CD8-positive, alpha-beta T cell (primary cell): ENCODE measurements at regions of chr7 and their contacts with region 1.

Region 1: DNA sequence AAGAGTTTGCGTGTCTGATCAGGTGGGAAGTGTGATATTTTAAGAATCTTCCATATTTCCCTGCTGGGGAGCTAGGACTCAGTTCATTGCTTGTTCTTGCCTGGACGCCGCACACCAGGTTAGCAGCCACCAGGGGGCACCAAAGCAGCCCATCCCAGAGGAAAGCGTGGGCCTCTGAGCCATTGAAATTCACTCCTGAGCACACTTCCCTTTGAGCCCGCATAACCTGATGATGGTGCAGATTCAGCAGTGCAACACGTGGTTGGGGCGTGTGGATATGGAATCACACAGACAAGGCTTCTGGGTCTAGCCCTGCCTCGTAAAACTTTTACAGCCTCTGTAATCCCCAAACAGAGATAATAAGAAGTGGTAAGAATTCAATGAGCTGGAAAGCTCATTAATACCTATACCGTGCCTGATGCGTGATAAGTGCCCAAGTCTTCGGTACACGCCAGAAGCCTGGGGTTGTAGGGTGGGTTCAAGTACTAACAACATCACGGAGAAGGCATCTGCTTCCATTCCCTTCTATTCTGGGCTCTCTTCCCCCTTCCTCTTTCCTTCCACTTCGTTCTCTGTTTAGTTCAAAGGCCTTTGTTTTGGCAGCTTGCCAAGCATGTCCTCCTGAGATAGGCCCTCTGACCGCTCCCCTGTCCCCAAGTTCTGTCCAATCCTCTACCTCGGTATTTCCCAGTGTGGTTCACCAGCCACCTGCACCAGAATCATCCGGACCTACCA is 130.1 kb upstream of the KMT2E start:
- DNase-seq: peak; percentile 46 to 84 (median 77)
- ATAC-seq: peak; percentile 84
- H3K4me3 ChIP-seq: no peak overlapping the region
- H3K4me3 Mint-ChIP-seq: no peak overlapping the region
- H3K27ac ChIP-seq: no peak overlapping the region
- H3K27ac Mint-ChIP-seq: no peak overlapping the region
- H3K4me1 ChIP-seq: no peaks in the 10 kb centered on the region
- H3K4me1 Mint-ChIP-seq: peaks cover 5% of the 10 kb centered on the region
- H3K27me3 ChIP-seq: no peaks in the 10 kb centered on the region
- H3K27me3 Mint-ChIP-seq: no peaks in the 10 kb centered on the region
- CTCF ChIP-seq: peak; percentile 88

Region 2: DNA sequence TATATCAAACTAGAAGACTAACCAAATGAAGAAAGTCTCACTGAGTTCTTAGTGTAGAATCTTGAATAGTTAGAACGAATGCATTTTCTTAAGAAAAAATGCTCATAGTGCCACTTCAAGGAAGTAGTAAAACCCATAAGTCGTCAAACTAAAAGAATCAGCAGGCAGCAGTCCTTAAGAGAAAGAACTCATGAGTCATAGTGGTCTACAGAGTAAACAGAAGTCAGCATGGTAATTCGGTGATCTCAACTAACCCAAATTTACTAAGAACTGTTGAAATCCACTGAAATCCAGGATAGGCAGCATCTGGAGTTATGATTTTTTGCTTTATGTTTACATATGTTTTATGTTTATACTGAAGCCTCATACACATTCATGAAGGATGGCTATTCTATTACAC is 299.3 kb before region 1 on chr7:
- CTCF ChIA-PET with region 1: no interaction called
- POLR2A ChIA-PET with region 1: no interaction called
- intact Hi-C with region 1: no loop called
- DNase-seq: no peak
- ATAC-seq: no peak
- H3K4me3 ChIP-seq: no peak overlapping the region
- H3K4me3 Mint-ChIP-seq: no peak overlapping the region
- H3K27ac ChIP-seq: no peak overlapping the region
- H3K27ac Mint-ChIP-seq: no peak overlapping the region
- H3K4me1 ChIP-seq: no peaks in the 10 kb centered on the region
- H3K4me1 Mint-ChIP-seq: no peaks in the 10 kb centered on the region
- H3K27me3 ChIP-seq: no peaks in the 10 kb centered on the region
- H3K27me3 Mint-ChIP-seq: no peaks in the 10 kb centered on the region
- CTCF ChIP-seq: no peak

Region 3: GRCh38 chr7:104700336-104700735 is 183.5 kb before region 1 on chr7:
- CTCF ChIA-PET with region 1: no interaction called
- POLR2A ChIA-PET with region 1: no interaction called
- intact Hi-C with region 1: no loop called
- DNase-seq: no peak
- ATAC-seq: no peak
- H3K4me3 ChIP-seq: no peak overlapping the region
- H3K4me3 Mint-ChIP-seq: no peak overlapping the region
- H3K27ac ChIP-seq: no peak overlapping the region
- H3K27ac Mint-ChIP-seq: no peak overlapping the region
- H3K4me1 ChIP-seq: no peaks in the 10 kb centered on the region
- H3K4me1 Mint-ChIP-seq: no peaks in the 10 kb centered on the region
- H3K27me3 ChIP-seq: no peaks in the 10 kb centered on the region
- H3K27me3 Mint-ChIP-seq: peaks cover 5% of the 10 kb centered on the region
- CTCF ChIP-seq: no peak

Region 4: DNA sequence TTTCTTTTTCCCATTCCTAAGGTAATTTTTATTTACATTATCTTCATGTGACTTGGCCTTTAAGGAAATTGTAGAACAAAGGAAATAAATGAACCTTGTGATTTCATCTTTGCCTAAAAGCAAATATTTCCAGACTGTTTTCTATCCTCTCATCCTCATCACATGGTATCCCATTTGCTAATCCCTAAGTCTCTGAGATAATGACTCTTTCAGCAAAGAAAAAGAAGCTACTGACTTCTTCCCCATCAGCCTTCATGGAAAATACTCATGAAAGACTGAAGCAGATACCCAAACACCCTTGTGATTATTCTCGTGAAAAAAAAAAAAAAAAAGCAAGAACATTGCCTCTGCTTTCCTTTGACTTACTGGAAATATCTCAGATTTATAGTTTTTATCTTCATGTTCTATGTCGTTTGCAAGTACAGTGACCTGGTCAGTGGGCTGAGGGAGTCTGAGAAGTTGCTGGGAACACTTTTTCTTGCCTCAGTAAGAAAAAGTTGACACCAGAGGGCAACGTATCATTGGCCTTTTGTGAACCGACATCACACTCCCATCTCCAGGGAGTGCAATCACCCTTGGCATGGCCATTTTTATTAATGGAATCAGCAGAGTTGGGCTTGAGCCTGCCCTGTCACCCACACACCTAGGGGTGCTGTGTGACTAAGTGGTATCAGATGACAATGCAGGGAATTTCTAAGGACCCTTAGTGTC is 115.9 kb before region 1 on chr7:
- CTCF ChIA-PET with region 1: no interaction called
- POLR2A ChIA-PET with region 1: no interaction called
- intact Hi-C with region 1: no loop called
- DNase-seq: no peak
- ATAC-seq: no peak
- H3K4me3 ChIP-seq: no peak overlapping the region
- H3K4me3 Mint-ChIP-seq: no peak overlapping the region
- H3K27ac ChIP-seq: no peak overlapping the region
- H3K27ac Mint-ChIP-seq: no peak overlapping the region
- H3K4me1 ChIP-seq: no peaks in the 10 kb centered on the region
- H3K4me1 Mint-ChIP-seq: no peaks in the 10 kb centered on the region
- H3K27me3 ChIP-seq: no peaks in the 10 kb centered on the region
- H3K27me3 Mint-ChIP-seq: peaks cover 13% of the 10 kb centered on the region
- CTCF ChIP-seq: no peak

Region 5: GRCh38 chr7:104779888-104780287 is 104.0 kb before region 1 on chr7:
- CTCF ChIA-PET with region 1: no interaction called
- POLR2A ChIA-PET with region 1: no interaction called
- intact Hi-C with region 1: no loop called
- DNase-seq: no peak
- ATAC-seq: no peak
- H3K4me3 ChIP-seq: no peak overlapping the region
- H3K4me3 Mint-ChIP-seq: no peak overlapping the region
- H3K27ac ChIP-seq: no peak overlapping the region
- H3K27ac Mint-ChIP-seq: no peak overlapping the region
- H3K4me1 ChIP-seq: no peaks in the 10 kb centered on the region
- H3K4me1 Mint-ChIP-seq: no peaks in the 10 kb centered on the region
- H3K27me3 ChIP-seq: no peaks in the 10 kb centered on the region
- H3K27me3 Mint-ChIP-seq: no peaks in the 10 kb centered on the region
- CTCF ChIP-seq: no peak

Region 6: GRCh38 chr7:104862719-104863118 is 21.2 kb before region 1 on chr7:
- CTCF ChIA-PET with region 1: interaction called, 25 read pairs
- POLR2A ChIA-PET with region 1: no interaction called
- intact Hi-C with region 1: no loop called
- DNase-seq: no peak
- ATAC-seq: no peak
- H3K4me3 ChIP-seq: no peak overlapping the region
- H3K4me3 Mint-ChIP-seq: no peak overlapping the region
- H3K27ac ChIP-seq: no peak overlapping the region
- H3K27ac Mint-ChIP-seq: no peak overlapping the region
- H3K4me1 ChIP-seq: peaks cover 9% of the 10 kb centered on the region
- H3K4me1 Mint-ChIP-seq: peaks cover 10% of the 10 kb centered on the region
- H3K27me3 ChIP-seq: no peaks in the 10 kb centered on the region
- H3K27me3 Mint-ChIP-seq: peaks cover 17% of the 10 kb centered on the region
- CTCF ChIP-seq: no peak

Region 7: GRCh38 chr7:104895522-104896236 is 11.8 kb after region 1 on chr7:
- CTCF ChIA-PET with region 1: interaction called, 52 read pairs
- POLR2A ChIA-PET with region 1: no interaction called
- intact Hi-C with region 1: no loop called
- DNase-seq: no peak
- ATAC-seq: no peak
- H3K4me3 ChIP-seq: no peak overlapping the region
- H3K4me3 Mint-ChIP-seq: no peak overlapping the region
- H3K27ac ChIP-seq: no peak overlapping the region
- H3K27ac Mint-ChIP-seq: no peak overlapping the region
- H3K4me1 ChIP-seq: no peaks in the 10 kb centered on the region
- H3K4me1 Mint-ChIP-seq: peaks cover 4% of the 10 kb centered on the region
- H3K27me3 ChIP-seq: no peaks in the 10 kb centered on the region
- H3K27me3 Mint-ChIP-seq: peaks cover 4% of the 10 kb centered on the region
- CTCF ChIP-seq: no peak

Region 8: GRCh38 chr7:104908636-104909035 is 24.8 kb after region 1 on chr7:
- CTCF ChIA-PET with region 1: interaction called, 14 read pairs
- POLR2A ChIA-PET with region 1: no interaction called
- intact Hi-C with region 1: no loop called
- DNase-seq: no peak
- ATAC-seq: no peak
- H3K4me3 ChIP-seq: no peak overlapping the region
- H3K4me3 Mint-ChIP-seq: no peak overlapping the region
- H3K27ac ChIP-seq: no peak overlapping the region
- H3K27ac Mint-ChIP-seq: no peak overlapping the region
- H3K4me1 ChIP-seq: no peaks in the 10 kb centered on the region
- H3K4me1 Mint-ChIP-seq: no peaks in the 10 kb centered on the region
- H3K27me3 ChIP-seq: no peaks in the 10 kb centered on the region
- H3K27me3 Mint-ChIP-seq: peaks cover 10% of the 10 kb centered on the region
- CTCF ChIP-seq: no peak

Region 9: GRCh38 chr7:104967595-104967994 is 83.7 kb after region 1 on chr7:
- CTCF ChIA-PET with region 1: no interaction called
- POLR2A ChIA-PET with region 1: no interaction called
- intact Hi-C with region 1: loop called in 1 of 2 experiments (anchors 5 kb)
- DNase-seq: no peak
- ATAC-seq: no peak
- H3K4me3 ChIP-seq: no peak overlapping the region
- H3K4me3 Mint-ChIP-seq: no peak overlapping the region
- H3K27ac ChIP-seq: no peak overlapping the region
- H3K27ac Mint-ChIP-seq: no peak overlapping the region
- H3K4me1 ChIP-seq: no peaks in the 10 kb centered on the region
- H3K4me1 Mint-ChIP-seq: no peaks in the 10 kb centered on the region
- H3K27me3 ChIP-seq: no peaks in the 10 kb centered on the region
- H3K27me3 Mint-ChIP-seq: no peaks in the 10 kb centered on the region
- CTCF ChIP-seq: no peak

Region 10: GRCh38 chr7:105589356-105590077 is 705.6 kb after region 1 on chr7:
- CTCF ChIA-PET with region 1: interaction called, 3 read pairs
- POLR2A ChIA-PET with region 1: no interaction called
- intact Hi-C with region 1: loop called (anchors 2 to 10 kb)
- DNase-seq: peak; percentile 6 to 68 (median 44)
- ATAC-seq: peak; percentile 89
- H3K4me3 ChIP-seq: no peak overlapping the region
- H3K4me3 Mint-ChIP-seq: no peak overlapping the region
- H3K27ac ChIP-seq: no peak overlapping the region
- H3K27ac Mint-ChIP-seq: no peak overlapping the region
- H3K4me1 ChIP-seq: no peaks in the 10 kb centered on the region
- H3K4me1 Mint-ChIP-seq: peaks cover 11% of the 10 kb centered on the region
- H3K27me3 ChIP-seq: no peaks in the 10 kb centered on the region
- H3K27me3 Mint-ChIP-seq: no peaks in the 10 kb centered on the region
- CTCF ChIP-seq: peak; percentile 56